Caco-2 (cell line): ENCODE measurements at regions of chr2 and their contacts with region 1.

Region 1: GRCh38 chr2:124973396-124973795 is 948.3 kb downstream of the CNTNAP5 start:
- DNase-seq: peak; percentile 65 to 77
- H3K4me3 ChIP-seq: no peak overlapping the region
- H3K4me3 Mint-ChIP-seq: no peak overlapping the region
- H3K27ac Mint-ChIP-seq: no peak overlapping the region
- H3K4me1 ChIP-seq: peaks cover 27% of the 10 kb centered on the region
- H3K4me1 Mint-ChIP-seq: peaks cover 13% of the 10 kb centered on the region
- H3K27me3 ChIP-seq: no peaks in the 10 kb centered on the region
- H3K27me3 Mint-ChIP-seq: no peaks in the 10 kb centered on the region
- CTCF ChIP-seq: no peak

Region 2: DNA sequence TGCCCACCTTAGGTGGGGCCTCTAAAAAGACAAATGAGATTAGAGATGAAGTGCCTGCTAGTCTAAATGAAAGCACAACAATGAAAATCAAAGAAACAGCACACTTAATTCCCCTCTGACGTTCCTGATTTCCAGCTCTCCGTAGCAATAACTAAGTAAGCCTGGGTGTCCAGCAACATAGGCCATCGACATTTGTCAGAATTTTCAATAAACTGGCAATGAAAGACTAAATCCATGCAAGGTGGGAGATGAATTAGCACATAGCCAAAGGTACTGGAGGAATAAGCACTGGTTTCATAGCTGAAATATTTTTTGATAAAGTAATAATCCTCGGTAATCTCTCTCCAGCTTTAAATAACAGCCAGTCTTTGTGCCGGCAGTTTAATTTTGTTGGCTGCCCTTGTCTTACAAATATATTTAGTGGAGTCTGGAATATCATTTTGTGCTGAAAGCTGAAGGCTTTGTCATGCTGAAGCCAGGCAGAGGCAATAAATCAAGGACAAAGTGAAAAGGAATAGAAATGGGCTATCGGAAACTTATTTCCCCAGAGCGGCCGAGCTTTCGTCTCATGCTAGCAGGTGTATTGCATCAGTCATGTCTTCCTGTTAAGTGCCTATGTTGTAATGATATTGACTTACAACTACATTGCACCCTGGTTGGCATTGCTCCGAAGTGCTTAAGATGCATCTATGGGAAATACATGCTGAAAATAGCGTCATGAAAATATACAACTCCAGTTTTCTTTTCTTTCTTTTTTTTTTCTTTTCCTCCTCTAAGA is 158.2 kb before region 1 on chr2:
- CTCF ChIA-PET with region 1: no interaction called
- POLR2A ChIA-PET with region 1: no interaction called
- intact Hi-C with region 1: loop called (anchors 5 kb)
- DNase-seq: peak in 1 of 2 experiments; percentile 10
- H3K4me3 ChIP-seq: no peak overlapping the region
- H3K4me3 Mint-ChIP-seq: no peak overlapping the region
- H3K27ac Mint-ChIP-seq: no peak overlapping the region
- H3K4me1 ChIP-seq: peaks cover 22% of the 10 kb centered on the region
- H3K4me1 Mint-ChIP-seq: peaks cover 19% of the 10 kb centered on the region
- H3K27me3 ChIP-seq: no peaks in the 10 kb centered on the region
- H3K27me3 Mint-ChIP-seq: peaks cover 3% of the 10 kb centered on the region
- CTCF ChIP-seq: no peak

Region 3: DNA sequence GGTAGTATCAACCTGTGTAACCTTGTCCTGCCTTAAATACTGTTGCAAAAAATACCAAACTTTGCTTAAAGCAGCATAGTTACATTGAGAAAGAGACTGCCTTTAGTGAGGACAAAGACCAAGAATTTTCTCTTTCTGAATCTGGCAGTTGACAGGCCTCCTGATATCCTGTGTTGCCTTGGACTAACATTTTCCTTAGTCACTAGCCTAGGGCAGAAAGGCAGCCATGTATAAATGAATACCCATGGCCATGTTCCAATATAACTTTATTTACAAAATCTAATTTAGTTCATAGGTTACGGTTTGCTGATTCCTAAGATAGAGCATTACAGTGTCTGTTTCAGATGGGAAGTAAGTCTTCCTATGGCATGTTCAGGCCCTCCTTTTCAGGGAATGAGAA is 52.9 kb before region 1 on chr2:
- CTCF ChIA-PET with region 1: no interaction called
- POLR2A ChIA-PET with region 1: no interaction called
- intact Hi-C with region 1: loop called (anchors 2 kb)
- DNase-seq: no peak
- H3K4me3 ChIP-seq: no peak overlapping the region
- H3K4me3 Mint-ChIP-seq: no peak overlapping the region
- H3K27ac Mint-ChIP-seq: no peak overlapping the region
- H3K4me1 ChIP-seq: no peaks in the 10 kb centered on the region
- H3K4me1 Mint-ChIP-seq: no peaks in the 10 kb centered on the region
- H3K27me3 ChIP-seq: no peaks in the 10 kb centered on the region
- H3K27me3 Mint-ChIP-seq: peaks cover 4% of the 10 kb centered on the region
- CTCF ChIP-seq: no peak

Region 4: GRCh38 chr2:124985270-124985669 is 11.9 kb after region 1 on chr2:
- CTCF ChIA-PET with region 1: no interaction called
- POLR2A ChIA-PET with region 1: no interaction called
- intact Hi-C with region 1: loop called (anchors 1 kb)
- DNase-seq: peak in 1 of 2 experiments; percentile 15
- H3K4me3 ChIP-seq: no peak overlapping the region
- H3K4me3 Mint-ChIP-seq: no peak overlapping the region
- H3K27ac Mint-ChIP-seq: peak overlapping the region; percentile 17
- H3K4me1 ChIP-seq: peaks cover 17% of the 10 kb centered on the region; the same call in 1 of the 2 replicates
- H3K4me1 Mint-ChIP-seq: peaks cover 11% of the 10 kb centered on the region
- H3K27me3 ChIP-seq: no peaks in the 10 kb centered on the region
- H3K27me3 Mint-ChIP-seq: no peaks in the 10 kb centered on the region
- CTCF ChIP-seq: no peak

Region 5: GRCh38 chr2:125086313-125087184 is 113.2 kb after region 1 on chr2:
- CTCF ChIA-PET with region 1: no interaction called
- POLR2A ChIA-PET with region 1: no interaction called
- intact Hi-C with region 1: loop called (anchors 5 kb)
- DNase-seq: peak in 1 of 2 experiments; percentile 24
- H3K4me3 ChIP-seq: no peak overlapping the region
- H3K4me3 Mint-ChIP-seq: peak overlapping the region; percentile 23
- H3K27ac Mint-ChIP-seq: peak overlapping the region; percentile 7
- H3K4me1 ChIP-seq: peaks cover 14% of the 10 kb centered on the region
- H3K4me1 Mint-ChIP-seq: peaks cover 10% of the 10 kb centered on the region
- H3K27me3 ChIP-seq: no peaks in the 10 kb centered on the region
- H3K27me3 Mint-ChIP-seq: no peaks in the 10 kb centered on the region
- CTCF ChIP-seq: no peak